Activated naive CD4-positive, alpha-beta T cell treated with anti-CD3 and anti-CD28 coated beads for 36 hours (primary cell): ENCODE measurements at regions of chr20 and their contacts with region 1.

Region 1: DNA sequence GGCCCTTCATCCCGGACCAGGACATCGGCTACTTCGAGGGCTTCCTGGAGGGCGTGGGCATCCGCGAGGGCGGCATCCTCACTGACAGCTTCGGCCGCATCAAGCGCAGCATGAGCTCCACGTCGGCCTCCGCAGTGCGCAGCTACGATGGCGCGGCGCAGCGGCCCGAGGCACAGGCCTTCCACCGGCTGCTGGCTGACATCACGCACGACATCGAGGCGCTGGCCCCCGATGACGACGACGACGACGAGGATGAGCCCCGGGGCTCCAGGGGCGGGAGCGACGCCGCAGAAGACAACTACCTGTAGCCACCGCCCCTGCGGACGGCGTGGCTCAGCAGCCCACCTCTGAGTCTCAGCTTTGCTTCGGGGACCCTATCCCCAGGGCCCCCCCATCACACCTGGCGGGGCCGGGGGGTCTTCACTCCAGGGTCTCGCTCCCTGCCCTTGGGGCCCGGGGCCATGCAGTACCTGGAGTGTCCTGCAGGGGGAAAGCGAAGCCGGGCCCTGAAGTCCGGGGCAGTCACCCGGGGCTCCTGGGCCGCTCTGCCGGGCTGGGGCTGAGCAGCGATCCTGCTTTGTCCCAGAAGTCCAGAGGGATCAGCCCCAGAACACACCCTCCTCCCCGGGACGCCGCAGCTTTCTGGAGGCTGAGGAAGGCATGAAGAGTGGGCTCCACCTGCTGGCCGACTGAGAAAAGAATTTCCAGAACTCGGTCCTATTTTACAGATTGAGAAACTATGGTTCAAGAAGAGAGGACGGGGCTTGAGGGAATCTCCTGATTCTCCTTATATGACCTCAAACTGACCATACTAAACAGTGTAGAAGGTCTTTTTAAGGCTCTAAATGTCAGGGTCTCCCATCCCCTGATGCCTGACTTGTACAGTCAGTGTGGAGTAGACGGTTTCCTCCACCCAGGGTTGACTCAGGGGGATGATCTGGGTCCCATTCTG is 20.8 kb upstream of the HCK start:
- DNase-seq: peak; percentile 77
- H3K4me3 Mint-ChIP-seq: peak overlapping the region; percentile 12
- H3K27ac Mint-ChIP-seq: no peak overlapping the region
- H3K4me1 Mint-ChIP-seq: no peaks in the 10 kb centered on the region
- H3K27me3 Mint-ChIP-seq: peaks cover 6% of the 10 kb centered on the region

Region 2: GRCh38 chr20:31572701-31573554 is 458.4 kb before region 1 on chr20:
- CTCF ChIA-PET with region 1: no interaction called
- intact Hi-C with region 1: no loop called
- DNase-seq: peak; percentile 92
- H3K4me3 Mint-ChIP-seq: peak overlapping the region; percentile 86
- H3K27ac Mint-ChIP-seq: peak overlapping the region; percentile 85
- H3K4me1 Mint-ChIP-seq: peaks cover 23% of the 10 kb centered on the region
- H3K27me3 Mint-ChIP-seq: no peaks in the 10 kb centered on the region

Region 3: DNA sequence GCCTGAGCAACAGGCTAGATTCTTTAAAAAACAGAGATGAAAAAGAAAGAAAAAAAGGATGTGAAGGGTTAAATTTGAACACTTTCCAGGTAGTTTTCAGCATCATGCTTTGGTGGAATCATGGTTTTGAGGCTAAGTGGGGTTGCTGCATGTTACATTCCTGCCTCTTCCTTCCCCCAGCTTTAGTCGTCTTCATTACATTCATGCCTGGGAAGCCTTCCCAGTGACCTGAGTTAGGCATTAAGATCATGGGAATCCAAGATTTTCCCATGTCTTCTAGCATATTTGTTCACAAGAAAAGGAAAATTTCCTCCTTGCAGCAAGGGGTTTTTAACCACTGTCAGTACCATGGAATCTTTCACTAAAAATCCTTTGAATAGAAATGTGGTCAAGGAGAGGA is 280.2 kb before region 1 on chr20:
- CTCF ChIA-PET with region 1: no interaction called
- intact Hi-C with region 1: no loop called
- DNase-seq: no peak
- H3K4me3 Mint-ChIP-seq: no peak overlapping the region
- H3K27ac Mint-ChIP-seq: no peak overlapping the region
- H3K4me1 Mint-ChIP-seq: no peaks in the 10 kb centered on the region
- H3K27me3 Mint-ChIP-seq: no peaks in the 10 kb centered on the region

Region 4: DNA sequence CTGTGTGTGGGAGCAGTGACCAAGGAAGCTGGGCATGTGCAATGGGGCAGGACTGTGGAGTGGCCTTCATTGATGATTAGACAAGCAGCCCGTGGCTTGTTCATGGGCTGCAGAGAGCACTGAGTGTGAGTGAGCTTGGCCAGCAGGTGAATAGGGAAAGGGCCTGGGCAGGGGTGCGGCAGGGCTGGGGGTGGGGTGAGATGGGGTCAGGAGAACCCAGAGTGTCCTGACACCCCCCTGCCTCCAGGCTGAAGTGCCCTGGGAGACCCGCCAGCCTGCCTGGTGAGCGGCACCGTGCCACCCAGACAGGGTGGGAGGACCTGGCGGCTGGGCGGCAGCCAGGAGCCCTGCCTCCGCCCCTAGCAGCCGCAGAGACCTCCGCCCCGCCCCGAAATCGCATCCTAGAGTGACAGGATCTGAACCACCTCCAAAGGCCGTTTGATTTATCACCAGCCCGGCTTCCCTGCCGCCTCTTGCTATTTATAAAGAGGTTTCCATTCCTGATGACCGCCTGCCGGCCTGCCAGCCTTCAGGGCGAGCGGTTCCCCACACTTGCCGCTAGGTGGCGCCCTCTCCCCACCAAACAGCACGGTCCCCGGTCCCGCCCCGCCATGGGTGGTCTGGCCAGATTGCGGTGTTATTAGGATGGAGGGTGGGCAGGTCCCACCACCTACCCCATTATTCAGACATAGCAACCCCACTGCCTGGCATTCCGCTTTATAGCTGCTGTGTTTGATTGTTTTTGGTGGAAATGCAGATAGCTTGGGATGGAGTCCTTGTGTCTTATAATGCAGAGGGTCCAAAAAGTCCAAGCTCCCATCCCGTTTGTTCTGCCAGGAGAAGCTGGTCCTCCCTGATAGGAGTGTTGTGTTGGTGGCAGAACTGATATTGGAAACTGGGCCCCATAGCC is 208.6 kb before region 1 on chr20:
- CTCF ChIA-PET with region 1: interaction called, 13 read pairs
- intact Hi-C with region 1: loop called (anchors 1 kb)
- DNase-seq: peak; percentile 79
- H3K4me3 Mint-ChIP-seq: no peak overlapping the region
- H3K27ac Mint-ChIP-seq: no peak overlapping the region
- H3K4me1 Mint-ChIP-seq: peaks cover 4% of the 10 kb centered on the region
- H3K27me3 Mint-ChIP-seq: peaks cover 3% of the 10 kb centered on the region

Region 5: DNA sequence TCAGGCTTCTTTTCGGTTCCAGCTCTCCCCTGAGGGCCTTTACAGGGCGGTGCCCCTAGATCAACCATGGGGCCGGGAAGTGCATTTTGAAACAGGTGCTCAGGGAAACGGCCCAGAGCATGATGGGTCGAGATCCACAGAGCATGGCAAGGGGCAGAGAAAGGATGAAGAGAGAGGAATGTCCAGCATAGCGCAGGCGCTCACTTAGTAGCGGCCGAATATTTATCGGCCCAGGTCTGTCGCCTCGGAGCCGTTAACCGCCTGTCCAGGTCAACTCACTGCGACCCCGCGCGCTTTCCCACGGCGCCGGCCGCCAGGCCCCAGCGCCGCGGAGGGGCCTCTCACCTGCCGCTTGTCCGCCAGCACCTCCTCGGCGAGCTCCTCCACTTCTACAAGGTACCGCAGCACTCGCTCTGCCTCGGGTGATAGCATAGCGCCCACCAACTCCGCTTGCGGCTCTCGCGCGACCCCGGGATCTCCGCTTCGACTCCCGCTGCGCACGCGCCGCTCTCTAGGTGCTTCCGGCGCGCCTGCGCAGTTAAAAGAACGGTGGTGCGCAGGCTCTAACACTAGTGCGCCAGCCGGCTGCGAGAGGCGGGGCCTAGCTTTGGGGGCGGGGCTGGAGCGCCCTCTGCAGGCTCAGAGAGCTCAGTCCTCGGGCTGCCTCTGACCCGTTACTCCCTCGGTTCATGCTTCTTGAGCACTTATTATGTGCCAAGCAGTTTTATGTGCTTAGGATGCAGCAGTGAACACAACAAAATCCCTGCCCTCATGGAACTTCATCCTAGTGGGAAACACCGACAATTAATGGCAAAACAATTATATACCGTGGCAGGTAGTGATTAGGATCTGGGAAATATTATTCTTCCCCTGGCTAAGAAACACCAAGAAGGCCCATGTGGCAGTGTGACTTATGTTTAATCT is 79.5 kb before region 1 on chr20 and contains the start of gene PDRG1:
- CTCF ChIA-PET with region 1: interaction called, 16 read pairs
- intact Hi-C with region 1: no loop called
- DNase-seq: peak; percentile 98
- H3K4me3 Mint-ChIP-seq: peak within 1 kb of the TSS; percentile 99
- H3K27ac Mint-ChIP-seq: peak within 1 kb of the TSS; percentile 93
- H3K4me1 Mint-ChIP-seq: peaks cover 29% of the 10 kb centered on the region
- H3K27me3 Mint-ChIP-seq: peaks cover 2% of the 10 kb centered on the region
- total RNA-seq, gene PDRG1: 17.4 to 19.3 TPM

Region 6: GRCh38 chr20:32018269-32019074 is 12.8 kb before region 1 on chr20:
- CTCF ChIA-PET with region 1: interaction called, 37 read pairs
- intact Hi-C with region 1: no loop called
- DNase-seq: peak; percentile 58
- H3K4me3 Mint-ChIP-seq: peak overlapping the region; percentile 74
- H3K27ac Mint-ChIP-seq: no peak overlapping the region
- H3K4me1 Mint-ChIP-seq: peaks cover 16% of the 10 kb centered on the region
- H3K27me3 Mint-ChIP-seq: peaks cover 60% of the 10 kb centered on the region

Region 7: DNA sequence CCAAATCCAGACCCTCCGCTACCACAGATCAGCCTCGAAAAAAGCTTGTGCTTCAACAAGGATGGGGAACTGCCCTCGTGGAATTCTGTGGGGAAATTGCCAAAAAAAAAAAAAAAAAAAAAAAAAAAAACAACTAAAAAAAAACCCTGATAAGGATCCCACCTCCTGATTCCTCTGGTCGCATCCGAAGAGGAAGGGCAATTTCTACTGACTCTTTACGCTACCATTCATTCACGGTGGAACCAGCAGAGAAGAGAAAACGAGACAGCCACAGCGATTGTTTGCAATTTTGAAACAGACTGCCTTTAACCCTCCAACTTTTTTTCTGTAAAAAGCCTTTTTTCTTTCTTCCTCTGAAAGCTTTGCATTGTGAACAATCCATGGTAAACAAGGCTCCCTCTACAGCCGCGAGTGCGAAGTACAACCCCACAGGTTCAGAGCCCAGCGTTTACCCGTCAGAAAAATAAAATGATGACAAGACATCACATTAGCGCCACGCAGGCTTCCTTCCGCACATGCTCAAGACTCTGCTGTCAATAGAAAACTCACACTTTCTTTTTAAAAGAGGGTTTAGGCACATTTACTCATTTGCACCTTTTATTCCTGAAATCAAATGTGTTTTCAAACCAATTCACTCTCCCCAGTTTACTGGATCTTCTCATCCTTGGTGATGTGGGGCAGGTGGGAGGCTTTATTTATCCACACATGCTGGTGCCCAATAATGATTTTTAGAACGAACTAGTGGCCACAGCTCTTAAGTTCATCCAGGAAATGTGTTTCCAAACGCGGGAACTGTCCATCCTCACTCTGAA is 453.9 kb after region 1 on chr20:
- CTCF ChIA-PET with region 1: no interaction called
- intact Hi-C with region 1: loop called (anchors 10 kb)
- DNase-seq: peak; percentile 95
- H3K4me3 Mint-ChIP-seq: peak overlapping the region; percentile 84
- H3K27ac Mint-ChIP-seq: peak overlapping the region; percentile 93
- H3K4me1 Mint-ChIP-seq: peaks cover 39% of the 10 kb centered on the region
- H3K27me3 Mint-ChIP-seq: no peaks in the 10 kb centered on the region